ENCODE measurements at regions of chr5 and their contacts with region 1.

Region 1: DNA sequence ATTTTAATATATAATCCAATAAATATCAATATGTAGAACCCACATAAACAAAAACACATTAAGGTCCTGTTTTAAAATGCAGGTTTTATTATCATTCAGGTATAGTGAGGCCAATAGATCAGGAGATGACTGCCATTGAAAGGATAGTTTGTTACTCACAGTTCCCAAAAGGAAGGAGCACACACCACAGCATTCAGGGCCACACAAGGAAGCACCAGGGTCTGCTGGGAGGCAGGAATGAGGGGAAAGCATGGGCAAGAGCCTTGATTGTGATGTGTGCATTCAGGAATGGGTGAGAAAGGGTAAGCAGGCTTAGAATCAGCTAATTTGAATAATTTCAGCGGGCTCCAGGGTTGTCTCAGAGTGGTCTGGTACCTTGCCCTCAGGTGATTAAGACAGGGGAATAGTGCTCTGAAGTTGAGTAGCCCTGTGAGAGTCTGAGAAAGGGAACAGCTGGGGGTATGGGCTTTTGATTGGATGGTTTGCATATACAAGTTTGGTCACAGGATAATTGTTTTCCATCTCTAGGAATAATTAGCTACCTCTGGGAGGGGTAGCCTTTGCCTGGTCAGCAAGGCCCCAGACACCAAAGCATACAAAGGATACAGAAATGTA is 19.8 kb upstream of the OTULIN start:
- DNase-seq: no peak
- H3K4me3 ChIP-seq: no peak overlapping the region
- H3K4me1 ChIP-seq: no peaks in the 10 kb centered on the region
- H3K27me3 ChIP-seq: peaks cover 4% of the 10 kb centered on the region; the same call in 1 of the 2 replicates

Region 2: DNA sequence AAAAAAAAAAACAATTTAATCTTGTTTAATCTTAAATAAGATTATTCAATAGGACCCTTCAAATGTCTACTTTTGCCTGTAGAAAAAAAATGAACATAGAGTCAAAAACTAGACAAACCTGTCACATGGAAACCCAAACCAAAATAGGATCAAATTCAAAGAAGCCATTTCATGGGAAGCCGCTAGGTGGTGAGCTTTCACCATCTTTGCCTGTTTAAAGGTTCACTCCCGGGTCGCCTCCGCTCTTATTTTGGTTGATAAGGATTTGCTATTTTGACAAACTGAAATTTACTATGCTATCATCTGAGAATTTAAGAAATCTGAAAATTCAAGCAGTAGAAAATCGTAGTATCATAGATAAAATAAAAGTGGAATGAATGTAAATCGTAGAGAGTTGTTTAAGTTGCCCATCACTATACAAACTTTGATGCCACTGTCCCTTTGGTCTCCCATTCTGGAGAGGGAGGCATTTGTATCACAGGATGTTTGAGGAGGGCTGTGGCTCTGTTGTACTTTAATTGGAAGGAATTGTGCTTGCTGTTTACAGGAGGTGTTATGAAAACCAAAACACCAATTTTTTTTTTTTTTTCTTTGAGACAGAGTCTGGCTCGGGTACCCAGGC is 656.8 kb before region 1 on chr5:
- in situ Hi-C with region 1: loop called (anchors 10 kb)
- DNase-seq: peak; percentile 61 to 66
- H3K4me3 ChIP-seq: no peak overlapping the region
- H3K4me1 ChIP-seq: no peaks in the 10 kb centered on the region
- H3K27me3 ChIP-seq: peaks cover 13% of the 10 kb centered on the region

Region 3: GRCh38 chr5:14234219-14234618 is 410.5 kb before region 1 on chr5:
- in situ Hi-C with region 1: no loop called
- DNase-seq: no peak
- H3K4me3 ChIP-seq: no peak overlapping the region
- H3K4me1 ChIP-seq: peaks cover 7% of the 10 kb centered on the region
- H3K27me3 ChIP-seq: no peaks in the 10 kb centered on the region

Region 4: GRCh38 chr5:14581333-14581890 is 63.3 kb before region 1 on chr5 and contains the start of gene OTULINL:
- in situ Hi-C with region 1: no loop called
- DNase-seq: peak; percentile 75 to 93
- H3K4me3 ChIP-seq: peak within 1 kb of the TSS; percentile 57
- H3K4me1 ChIP-seq: no peaks in the 10 kb centered on the region; the same call in 1 of the 2 replicates
- H3K27me3 ChIP-seq: no peaks in the 10 kb centered on the region; the same call in 1 of the 2 replicates